Activated B cell treated with CpG ODN at 0.5 μM for 24 hours (primary cell): ENCODE measurements at regions of chr22 and their contacts with region 1.

Region 1: DNA sequence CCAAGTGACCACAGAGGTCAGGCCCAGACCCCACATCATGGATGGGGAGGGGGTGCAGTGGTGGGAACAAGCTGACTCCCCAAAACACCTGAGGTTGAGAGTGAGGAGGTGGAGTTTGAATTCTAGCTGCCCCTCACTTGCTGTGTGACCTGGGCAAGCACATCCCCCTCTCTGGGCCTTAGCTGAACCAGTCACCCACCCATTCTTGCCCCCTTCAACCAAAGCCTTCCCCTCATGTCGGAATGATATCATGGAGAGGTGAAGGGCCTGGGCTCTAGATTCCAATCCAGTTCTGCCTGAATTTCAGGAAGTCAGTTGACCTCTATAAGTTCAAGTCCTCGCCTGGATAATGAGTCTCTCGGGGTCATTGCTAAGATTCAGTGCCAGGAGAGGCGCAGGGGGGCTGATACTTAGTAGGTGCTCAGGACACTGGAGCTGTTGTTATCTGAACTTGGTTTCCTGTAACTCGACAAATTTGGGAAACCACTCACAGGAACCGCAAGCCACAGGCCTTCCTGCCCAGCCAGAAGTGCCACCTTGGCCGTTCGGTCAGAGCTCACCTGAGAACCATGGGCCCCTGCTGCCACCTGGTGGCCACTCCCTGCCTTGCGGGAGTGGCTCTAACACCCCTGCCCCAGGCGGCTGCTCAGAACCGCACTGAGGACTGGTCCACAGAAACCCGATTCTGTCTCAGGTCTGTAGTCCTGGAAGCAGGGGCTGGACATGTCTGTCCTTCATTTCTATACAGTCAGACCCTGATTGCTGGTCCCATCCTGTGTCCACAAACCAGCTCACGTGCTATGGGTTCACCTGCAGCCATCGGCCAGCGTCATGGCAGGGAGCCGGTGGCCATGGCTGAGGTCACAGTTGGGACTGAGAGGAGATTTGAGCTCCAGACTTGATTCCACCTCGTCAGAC is 6.9 kb downstream of the CDC42EP1 start:
- DNase-seq: peak; percentile 84
- ATAC-seq: peak; percentile 94
- H3K4me3 Mint-ChIP-seq: peak overlapping the region; percentile 32
- H3K27ac Mint-ChIP-seq: peak overlapping the region; percentile 53
- H3K4me1 Mint-ChIP-seq: peaks cover 21% of the 10 kb centered on the region
- H3K27me3 Mint-ChIP-seq: peaks cover 21% of the 10 kb centered on the region
- CTCF ChIP-seq: peak; percentile 90

Region 2: DNA sequence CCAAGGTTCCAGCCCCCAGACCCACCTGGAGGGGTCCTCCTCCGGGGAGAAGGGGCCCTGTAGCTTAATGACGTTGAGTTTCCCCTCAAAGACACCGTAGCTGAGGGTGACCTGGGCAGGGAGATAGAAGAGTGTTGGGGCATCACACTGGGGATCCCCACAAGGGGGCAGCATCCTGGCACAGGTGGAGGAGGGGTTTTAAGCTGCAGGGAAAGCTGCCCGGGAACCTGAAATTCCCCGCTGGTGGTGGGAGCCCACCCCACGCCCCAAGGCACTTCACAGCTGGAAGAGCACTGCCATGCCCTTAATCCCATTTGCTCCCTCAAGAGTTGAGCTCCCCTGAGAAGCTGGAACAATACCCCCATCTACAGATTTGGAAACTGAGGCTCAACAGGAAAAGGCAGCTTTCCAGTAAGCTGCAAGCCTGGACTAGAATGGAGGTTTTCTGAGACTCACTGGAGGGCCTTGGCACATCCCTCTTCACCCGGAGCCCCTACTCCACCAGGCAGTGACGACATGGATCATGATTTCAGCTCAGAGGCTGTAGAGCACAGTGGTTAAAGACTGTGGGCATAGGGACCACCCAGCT is 94.7 kb before region 1 on chr22:
- CTCF ChIA-PET with region 1: interaction called, 32 read pairs
- POLR2A ChIA-PET with region 1: no interaction called
- intact Hi-C with region 1: loop called (anchors 1 kb)
- DNase-seq: no peak
- ATAC-seq: peak; percentile 47
- H3K4me3 Mint-ChIP-seq: no peak overlapping the region
- H3K27ac Mint-ChIP-seq: no peak overlapping the region
- H3K4me1 Mint-ChIP-seq: peaks cover 5% of the 10 kb centered on the region
- H3K27me3 Mint-ChIP-seq: no peaks in the 10 kb centered on the region
- CTCF ChIP-seq: no peak

Region 3: GRCh38 chr22:37498289-37498909 is 68.8 kb before region 1 on chr22:
- CTCF ChIA-PET with region 1: no interaction called
- POLR2A ChIA-PET with region 1: no interaction called
- intact Hi-C with region 1: loop called (anchors 1 kb)
- DNase-seq: peak; percentile 64
- ATAC-seq: peak; percentile 100
- H3K4me3 Mint-ChIP-seq: no peak overlapping the region
- H3K27ac Mint-ChIP-seq: no peak overlapping the region
- H3K4me1 Mint-ChIP-seq: peaks cover 6% of the 10 kb centered on the region
- H3K27me3 Mint-ChIP-seq: peaks cover 26% of the 10 kb centered on the region
- CTCF ChIP-seq: no peak

Region 4: GRCh38 chr22:37538590-37539357 is 28.4 kb before region 1 on chr22:
- CTCF ChIA-PET with region 1: interaction called, 255 read pairs
- POLR2A ChIA-PET with region 1: interaction called, 22 read pairs
- intact Hi-C with region 1: loop called (anchors 1 kb)
- DNase-seq: peak; percentile 81
- ATAC-seq: peak; percentile 100
- H3K4me3 Mint-ChIP-seq: peak overlapping the region; percentile 24
- H3K27ac Mint-ChIP-seq: peak overlapping the region; percentile 41
- H3K4me1 Mint-ChIP-seq: peaks cover 28% of the 10 kb centered on the region
- H3K27me3 Mint-ChIP-seq: peaks cover 21% of the 10 kb centered on the region
- CTCF ChIP-seq: peak; percentile 74

Region 5: GRCh38 chr22:37594237-37594636 is 27.1 kb after region 1 on chr22:
- CTCF ChIA-PET with region 1: interaction called, 23 read pairs
- POLR2A ChIA-PET with region 1: interaction called, 6 read pairs
- intact Hi-C with region 1: loop called (anchors 1 kb)
- DNase-seq: no peak
- ATAC-seq: no peak
- H3K4me3 Mint-ChIP-seq: no peak overlapping the region
- H3K27ac Mint-ChIP-seq: no peak overlapping the region
- H3K4me1 Mint-ChIP-seq: peaks cover 11% of the 10 kb centered on the region
- H3K27me3 Mint-ChIP-seq: no peaks in the 10 kb centered on the region
- CTCF ChIP-seq: no peak